Panc1 (cell line): ENCODE measurements at regions of chr15 and their contacts with region 1.

Region 1: DNA sequence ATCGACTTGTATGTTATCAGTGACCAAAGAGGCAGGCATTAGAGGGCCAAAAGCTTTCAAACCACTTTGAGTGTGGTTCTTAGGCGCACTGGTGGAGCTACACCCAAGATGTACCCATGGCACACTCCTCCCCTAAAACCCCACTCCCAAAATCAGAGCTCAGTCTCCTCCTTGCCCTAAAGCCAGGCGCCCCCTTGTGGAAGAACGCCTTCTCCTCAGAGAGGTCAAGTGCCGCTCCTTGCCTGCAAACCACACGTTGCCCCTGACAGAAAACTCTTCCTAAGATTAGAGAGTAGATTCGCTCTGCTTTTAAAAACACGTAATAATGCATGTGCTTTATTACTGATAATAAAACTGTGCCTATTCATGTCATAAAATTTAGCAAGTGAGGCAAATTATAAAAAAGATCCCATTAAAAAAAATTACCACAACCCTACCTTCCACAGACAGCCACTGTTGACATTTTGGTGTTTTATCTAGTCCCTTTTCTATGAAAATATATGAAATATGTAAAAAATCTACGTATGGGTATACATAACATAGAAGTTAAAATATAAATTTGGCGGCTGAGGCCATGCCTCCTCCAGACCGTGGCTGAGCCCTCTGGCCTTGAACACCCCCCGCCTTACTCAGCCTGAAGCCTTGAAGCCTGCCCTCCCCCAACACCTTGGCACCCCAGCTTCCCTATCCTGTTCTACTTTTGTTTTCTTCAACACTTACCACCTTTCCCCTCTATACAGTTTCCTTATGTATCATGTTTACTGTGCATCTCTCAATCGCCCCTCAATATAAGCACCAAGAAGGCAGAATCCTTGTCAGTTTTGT is 33.5 kb downstream of the BCL2L10 start:
- DNase-seq: no peak
- ATAC-seq: peak; percentile 84
- H3K4me3 ChIP-seq: no peak overlapping the region
- H3K27ac ChIP-seq: peak overlapping the region; percentile 11; the same call in 1 of the 2 replicates
- H3K4me1 ChIP-seq: peaks cover 8% of the 10 kb centered on the region
- H3K27me3 ChIP-seq: no peaks in the 10 kb centered on the region
- CTCF ChIP-seq: peak; percentile 95

Region 2: DNA sequence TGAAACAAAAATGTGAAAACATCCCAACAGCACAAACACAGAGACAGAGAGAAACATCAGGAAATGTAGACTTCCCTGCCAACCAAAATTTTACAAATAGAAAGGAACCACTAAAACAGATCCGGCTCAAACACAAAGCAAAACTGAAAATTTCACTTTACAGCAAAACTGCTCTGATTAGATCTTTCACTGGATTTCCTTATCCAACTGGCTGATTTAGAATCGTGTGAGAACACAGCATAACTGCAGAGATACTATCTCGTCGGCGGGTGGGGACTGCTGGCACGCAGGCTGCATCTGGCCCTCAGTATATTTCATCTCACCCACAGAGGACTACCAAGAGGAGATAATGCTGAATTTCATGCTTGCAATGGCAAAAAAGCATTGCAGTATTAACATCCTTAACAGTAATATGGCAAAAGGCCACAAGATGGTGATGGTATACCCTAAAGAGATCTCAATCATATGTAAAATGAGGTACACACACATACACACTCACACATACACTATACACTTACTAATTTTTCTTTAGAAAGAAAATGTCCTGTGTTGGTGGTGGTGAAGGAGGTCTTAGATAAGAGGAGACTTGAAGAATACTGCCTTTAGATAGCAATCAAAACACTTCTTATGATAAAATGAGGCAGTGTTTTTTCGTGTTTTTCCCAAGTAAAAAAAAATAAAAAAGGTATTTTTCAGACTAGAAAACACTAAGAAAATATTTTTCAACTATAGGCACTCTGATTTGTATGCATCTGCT is 96.9 kb before region 1 on chr15:
- CTCF ChIA-PET with region 1: no interaction called
- POLR2A ChIA-PET with region 1: no interaction called
- in situ Hi-C with region 1: no loop called
- intact Hi-C with region 1: loop called (anchors 2 kb)
- DNase-seq: peak; percentile 85
- ATAC-seq: peak; percentile 95
- H3K4me3 ChIP-seq: peak overlapping the region; percentile 6 to 43; a peak in 3 of 4 replicates
- H3K27ac ChIP-seq: peak overlapping the region; percentile 75
- H3K4me1 ChIP-seq: peaks cover 7% of the 10 kb centered on the region
- H3K27me3 ChIP-seq: no peaks in the 10 kb centered on the region
- CTCF ChIP-seq: no peak

Region 3: DNA sequence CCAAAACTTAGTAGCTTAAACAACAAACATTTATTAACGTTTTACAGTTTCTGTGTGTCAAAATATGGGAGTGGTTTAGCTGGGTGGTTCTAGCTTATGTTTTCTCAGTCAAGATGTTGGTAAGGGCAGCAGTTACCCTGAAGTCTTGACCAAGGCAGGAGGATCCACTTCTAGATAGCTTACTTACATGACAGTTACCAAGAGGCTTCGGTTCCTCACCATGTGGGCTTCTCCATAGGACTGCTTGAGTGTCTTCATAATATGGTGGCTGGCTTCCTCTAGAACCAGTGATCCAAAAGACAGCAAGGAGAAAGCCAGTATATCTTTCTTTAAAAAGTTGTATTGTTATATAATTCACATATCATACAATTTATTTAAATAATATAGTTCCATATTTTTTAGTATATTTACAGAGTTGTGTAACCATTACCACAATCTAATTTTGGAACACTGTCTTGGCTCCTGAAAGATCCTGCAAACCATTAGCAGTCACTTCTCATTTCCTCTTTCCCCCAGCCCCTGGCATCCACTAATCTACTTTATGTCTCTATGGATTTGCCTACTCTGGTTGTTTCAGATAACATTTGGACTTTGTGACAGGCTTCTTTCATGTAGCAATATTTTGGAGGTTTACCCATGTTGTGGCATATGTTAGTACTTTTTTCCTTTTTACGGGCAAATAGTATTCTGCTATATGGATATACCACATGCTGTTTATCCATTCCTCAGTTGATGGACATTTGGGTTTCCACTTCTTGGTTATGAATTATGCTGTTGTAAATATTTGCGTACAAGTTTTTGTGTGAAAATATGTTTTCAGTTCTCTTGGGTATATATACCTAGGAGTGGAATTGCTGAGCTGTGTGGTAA is 26.8 kb before region 1 on chr15:
- CTCF ChIA-PET with region 1: no interaction called
- POLR2A ChIA-PET with region 1: no interaction called
- in situ Hi-C with region 1: no loop called
- intact Hi-C with region 1: no loop called
- DNase-seq: no peak
- ATAC-seq: no peak
- H3K4me3 ChIP-seq: no peak overlapping the region
- H3K27ac ChIP-seq: no peak overlapping the region
- H3K4me1 ChIP-seq: peaks cover 32% of the 10 kb centered on the region
- H3K27me3 ChIP-seq: no peaks in the 10 kb centered on the region
- CTCF ChIP-seq: no peak

Region 4: DNA sequence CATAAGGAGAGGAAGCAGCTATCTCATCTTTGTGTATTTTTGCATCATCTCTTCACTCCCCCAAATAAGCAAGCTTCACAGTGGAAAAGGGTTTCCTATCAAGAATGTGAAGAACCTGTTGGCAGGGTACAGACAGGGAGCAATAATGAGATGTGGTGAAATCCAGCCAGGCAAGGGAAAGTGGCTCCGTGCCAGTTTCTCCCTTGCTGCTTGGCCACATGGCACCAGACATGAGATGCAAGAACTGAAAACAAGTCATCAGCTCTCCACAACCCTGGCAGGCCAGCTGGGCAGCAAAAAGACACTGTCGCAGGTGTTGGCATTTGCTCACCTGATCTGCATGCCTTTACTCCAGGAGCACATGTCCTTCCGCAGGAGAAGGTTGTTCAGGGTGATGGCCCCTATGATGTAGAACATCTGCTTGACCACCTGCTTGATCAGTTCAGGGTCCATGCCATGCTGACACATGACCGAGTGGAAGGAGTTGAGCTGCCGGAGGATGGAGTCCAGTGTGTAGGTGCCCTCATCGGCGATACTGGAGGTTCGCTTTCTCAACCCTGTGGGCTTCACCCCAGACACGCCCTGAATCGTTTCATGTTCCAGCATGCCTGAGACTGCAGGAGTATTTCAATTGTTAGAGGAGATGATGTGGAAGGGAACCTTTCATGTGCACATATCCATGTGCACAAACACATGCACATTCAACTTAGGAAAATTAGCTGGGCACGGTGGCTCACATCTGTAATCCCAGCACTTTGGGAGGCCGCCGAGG is 239.8 kb after region 1 on chr15:
- CTCF ChIA-PET with region 1: no interaction called
- POLR2A ChIA-PET with region 1: interaction called, 10 read pairs
- in situ Hi-C with region 1: no loop called
- intact Hi-C with region 1: no loop called
- DNase-seq: no peak
- ATAC-seq: 0 out of 2 replicates have a peak, but pooled peaks have one; percentile 17
- H3K4me3 ChIP-seq: no peak overlapping the region
- H3K27ac ChIP-seq: no peak overlapping the region
- H3K4me1 ChIP-seq: no peaks in the 10 kb centered on the region
- H3K27me3 ChIP-seq: no peaks in the 10 kb centered on the region
- CTCF ChIP-seq: no peak